Activated CD4-positive, alpha-beta T cell treated with anti-CD3 and anti-CD28 coated beads for 36 hours (primary cell): ENCODE measurements at regions of chr10 and their contacts with region 1.

Region 1: GRCh38 chr10:88901206-88901983 is 21.4 kb downstream of the STAMBPL1 start:
- DNase-seq: no peak
- ATAC-seq: peak; percentile 75
- H3K4me3 Mint-ChIP-seq: peak overlapping the region; percentile 26
- H3K27ac Mint-ChIP-seq: peak overlapping the region; percentile 90
- H3K4me1 Mint-ChIP-seq: peaks cover 60% of the 10 kb centered on the region
- H3K27me3 Mint-ChIP-seq: no peaks in the 10 kb centered on the region

Region 2: GRCh38 chr10:88670497-88670896 is 230.9 kb before region 1 on chr10:
- CTCF ChIA-PET with region 1: no interaction called
- POLR2A ChIA-PET with region 1: no interaction called
- intact Hi-C with region 1: loop called in 1 of 2 experiments (anchors 1 kb)
- DNase-seq: peak; percentile 40
- ATAC-seq: peak; percentile 99
- H3K4me3 Mint-ChIP-seq: no peak overlapping the region
- H3K27ac Mint-ChIP-seq: peak overlapping the region; percentile 11
- H3K4me1 Mint-ChIP-seq: peaks cover 25% of the 10 kb centered on the region
- H3K27me3 Mint-ChIP-seq: peaks cover 18% of the 10 kb centered on the region

Region 3: DNA sequence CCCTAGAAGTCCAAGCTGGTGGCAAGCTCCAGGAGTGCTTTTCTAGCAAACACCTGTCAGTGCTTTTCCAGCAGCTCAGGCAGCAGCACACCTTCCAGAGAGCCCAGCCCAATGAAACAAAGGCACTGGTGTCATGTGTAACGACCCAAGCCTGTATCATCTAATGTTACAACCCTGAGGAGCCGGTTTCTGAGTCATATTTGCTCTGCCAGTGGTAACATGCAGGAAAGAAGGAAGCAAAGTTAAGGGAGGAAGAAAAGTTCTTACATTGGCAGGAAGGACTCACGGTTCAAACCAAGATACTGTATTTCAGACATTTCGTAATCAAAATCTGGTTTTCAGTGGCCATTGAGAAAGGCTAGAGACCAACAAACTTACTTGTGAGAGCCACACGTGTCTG is 49.7 kb before region 1 on chr10 and contains the start of gene ANKRD22:
- CTCF ChIA-PET with region 1: interaction called, 4 read pairs
- POLR2A ChIA-PET with region 1: interaction called, 4 read pairs
- intact Hi-C with region 1: loop called (anchors 1 to 2 kb)
- DNase-seq: no peak
- ATAC-seq: no peak
- H3K4me3 Mint-ChIP-seq: no peak within 1 kb of the TSS
- H3K27ac Mint-ChIP-seq: no peak within 1 kb of the TSS
- H3K4me1 Mint-ChIP-seq: peaks cover 18% of the 10 kb centered on the region
- H3K27me3 Mint-ChIP-seq: peaks cover 9% of the 10 kb centered on the region
- total RNA-seq, gene ANKRD22: 0.37 TPM

Region 4: DNA sequence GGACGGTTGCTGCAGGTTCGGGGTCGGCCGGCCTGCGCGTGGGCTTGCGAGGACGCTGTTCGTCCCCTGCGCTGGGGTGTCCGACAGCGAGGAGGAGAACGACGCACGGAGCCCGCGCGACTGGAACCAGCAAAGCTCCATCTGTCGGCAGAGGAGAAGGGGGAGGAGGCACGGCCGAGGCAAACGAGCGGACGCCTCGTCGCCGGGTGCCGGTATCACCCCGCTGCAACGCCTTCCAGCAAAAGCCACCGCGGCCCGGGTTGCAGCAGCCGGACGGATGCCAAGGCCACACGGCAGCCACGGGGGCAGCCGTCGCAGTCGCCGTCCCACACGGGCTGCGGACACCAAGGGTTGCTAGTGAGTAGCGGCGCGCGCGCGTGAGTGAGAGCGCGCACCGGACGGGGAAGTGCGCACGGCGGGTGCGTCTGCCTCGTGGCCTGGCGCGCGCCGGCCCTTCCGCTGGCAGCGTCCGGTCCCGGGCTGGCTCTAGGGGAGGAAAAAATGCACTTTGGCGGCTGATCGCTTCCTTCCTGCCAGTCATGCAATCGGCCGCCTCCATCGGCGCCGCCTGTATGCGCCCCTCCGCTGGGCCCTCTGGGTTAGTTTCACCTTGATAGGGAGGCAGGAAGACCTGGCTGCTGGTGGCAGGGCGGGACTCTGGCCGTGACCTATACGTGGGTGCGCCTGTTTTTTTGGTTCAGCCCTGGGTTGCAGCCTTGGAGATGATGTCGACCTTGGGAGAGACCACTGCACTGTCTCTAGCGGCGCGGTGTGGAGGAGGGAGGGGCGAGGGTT is 20.9 kb before region 1 on chr10:
- CTCF ChIA-PET with region 1: interaction called, 18 read pairs
- POLR2A ChIA-PET with region 1: interaction called, 7 read pairs
- intact Hi-C with region 1: loop called (anchors 1 kb)
- DNase-seq: peak; percentile 87
- ATAC-seq: peak; percentile 81
- H3K4me3 Mint-ChIP-seq: peak overlapping the region; percentile 97
- H3K27ac Mint-ChIP-seq: peak overlapping the region; percentile 98
- H3K4me1 Mint-ChIP-seq: peaks cover 65% of the 10 kb centered on the region
- H3K27me3 Mint-ChIP-seq: no peaks in the 10 kb centered on the region

Region 5: GRCh38 chr10:88886557-88886956 is 14.8 kb before region 1 on chr10:
- CTCF ChIA-PET with region 1: interaction called, 43 read pairs
- POLR2A ChIA-PET with region 1: interaction called, 3 read pairs
- intact Hi-C with region 1: loop called in 1 of 2 experiments (anchors 1 kb)
- DNase-seq: peak; percentile 49
- ATAC-seq: peak; percentile 93
- H3K4me3 Mint-ChIP-seq: no peak overlapping the region
- H3K27ac Mint-ChIP-seq: no peak overlapping the region
- H3K4me1 Mint-ChIP-seq: peaks cover 86% of the 10 kb centered on the region
- H3K27me3 Mint-ChIP-seq: no peaks in the 10 kb centered on the region

Region 6: DNA sequence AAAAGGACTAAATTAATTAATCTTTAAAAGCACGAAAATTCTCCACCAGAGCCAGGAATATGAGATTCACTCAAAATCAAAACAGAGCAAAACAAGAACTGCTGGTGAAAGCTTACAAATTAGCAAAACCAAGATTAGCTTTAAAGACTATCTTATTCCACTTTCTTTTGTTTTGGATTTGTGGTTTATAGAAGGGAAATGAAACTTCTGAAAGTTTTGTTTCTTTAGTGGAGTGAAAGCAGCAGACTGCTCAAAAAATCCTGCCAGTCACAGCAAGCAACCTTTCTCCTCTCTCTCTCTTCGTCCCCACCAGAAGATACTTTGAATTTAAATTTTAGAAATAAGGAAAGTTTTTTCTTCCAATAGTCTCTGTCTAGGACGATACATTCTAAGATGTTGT is 43.4 kb after region 1 on chr10:
- CTCF ChIA-PET with region 1: no interaction called
- POLR2A ChIA-PET with region 1: no interaction called
- intact Hi-C with region 1: no loop called
- DNase-seq: no peak
- ATAC-seq: no peak
- H3K4me3 Mint-ChIP-seq: no peak overlapping the region
- H3K27ac Mint-ChIP-seq: no peak overlapping the region
- H3K4me1 Mint-ChIP-seq: peaks cover 13% of the 10 kb centered on the region
- H3K27me3 Mint-ChIP-seq: no peaks in the 10 kb centered on the region